ENCODE measurements at regions of chr3 and their contacts with region 1.

Region 1: DNA sequence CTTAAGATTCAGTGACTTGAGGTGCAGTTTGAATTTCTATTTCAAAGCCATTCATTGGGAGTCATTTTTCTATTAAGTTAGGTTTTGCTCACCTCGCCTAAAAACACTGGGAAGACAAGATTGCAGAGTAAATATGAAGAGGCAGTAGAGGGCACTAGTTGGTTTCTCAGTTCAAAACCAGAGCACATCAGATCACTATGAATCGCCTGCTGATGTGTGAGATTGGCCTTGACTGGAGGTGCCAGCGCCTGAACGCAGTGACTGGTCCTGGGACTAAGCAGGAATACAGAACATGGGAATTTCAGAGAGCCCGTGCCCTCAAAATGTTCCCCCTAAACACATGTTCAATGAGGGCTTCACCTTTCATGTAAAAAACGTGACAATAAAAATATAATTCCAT is 229.0 kb downstream of the ITPR1 start:
- DNase-seq: peak; percentile 48 to 58
- ATAC-seq: peak; percentile 80

Region 2: DNA sequence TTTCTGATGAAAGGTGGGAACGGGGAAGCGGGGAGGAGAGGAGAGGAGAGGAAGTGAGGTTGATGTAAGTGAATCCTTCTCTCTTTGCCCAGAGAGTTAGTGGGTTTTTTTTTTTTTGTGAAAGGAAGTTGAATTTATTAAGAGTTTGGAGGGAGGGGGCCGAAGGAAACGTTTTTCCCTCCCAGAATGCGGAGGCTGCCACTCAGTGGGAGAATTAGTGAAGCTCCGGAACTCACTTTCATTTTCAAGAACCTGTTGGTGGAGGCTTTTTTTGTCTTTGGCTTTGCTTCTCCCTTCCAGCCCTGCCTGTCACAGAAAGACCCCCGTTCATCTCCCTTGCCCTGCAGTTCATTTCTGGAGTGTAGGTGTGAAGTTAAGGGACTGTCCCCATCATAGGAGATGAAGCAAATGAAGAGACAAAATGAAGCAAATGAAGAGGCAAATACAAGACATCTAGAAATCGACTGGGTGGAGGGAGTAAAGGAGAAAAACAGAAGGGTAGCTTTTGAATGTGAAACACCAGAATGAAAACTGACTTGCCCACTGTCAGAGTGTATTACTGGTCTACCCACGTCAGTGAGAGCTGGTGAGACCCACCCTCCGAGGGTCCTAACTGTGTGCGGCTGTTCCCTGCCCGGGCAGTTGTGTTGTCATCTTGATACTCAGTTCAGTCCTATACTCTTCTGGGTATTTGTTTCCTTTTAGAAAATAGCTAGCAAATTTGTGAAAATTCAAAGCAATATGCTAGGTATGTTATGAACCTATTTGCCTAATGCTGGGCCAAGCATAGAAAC is 137.4 kb before region 1 on chr3:
- intact Hi-C with region 1: no loop called
- DNase-seq: no peak
- ATAC-seq: no peak

Region 3: GRCh38 chr3:4826237-4827100 is 104.4 kb after region 1 on chr3:
- intact Hi-C with region 1: loop called in 1 of 2 experiments (anchors 10 kb)
- DNase-seq: peak; percentile 79 to 89
- ATAC-seq: peak; percentile 81

Region 4: GRCh38 chr3:4986782-4987537 is 264.9 kb after region 1 on chr3:
- intact Hi-C with region 1: loop called in 1 of 2 experiments (anchors 5 kb)
- DNase-seq: peak; percentile 97 to 99
- ATAC-seq: peak; percentile 88

Region 5: DNA sequence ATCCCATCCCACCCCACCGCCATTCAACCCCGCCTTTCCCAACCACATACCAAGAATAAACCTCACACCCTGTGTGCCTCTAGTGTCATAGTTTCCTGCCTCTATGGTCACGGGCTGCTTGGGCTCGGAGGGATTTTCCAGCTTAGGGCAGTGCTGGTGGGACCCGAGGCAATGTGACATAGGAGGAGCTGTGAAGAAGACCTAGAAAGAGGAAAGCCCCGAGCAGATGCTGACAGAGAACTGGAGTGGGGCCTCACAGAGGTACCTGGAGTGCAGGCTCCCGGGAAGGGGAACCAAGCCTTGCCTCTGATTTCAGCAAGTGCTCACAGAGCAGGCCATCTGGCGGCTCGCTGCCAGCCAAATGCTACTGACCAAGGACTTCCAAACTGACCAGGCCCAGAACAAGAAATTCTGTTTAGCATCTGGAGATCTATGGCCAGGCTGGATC is 284.7 kb after region 1 on chr3:
- intact Hi-C with region 1: no loop called
- DNase-seq: no peak
- ATAC-seq: no peak